SK-N-SH (cell line): ENCODE measurements at regions of chr2 and their contacts with region 1.

Region 1: DNA sequence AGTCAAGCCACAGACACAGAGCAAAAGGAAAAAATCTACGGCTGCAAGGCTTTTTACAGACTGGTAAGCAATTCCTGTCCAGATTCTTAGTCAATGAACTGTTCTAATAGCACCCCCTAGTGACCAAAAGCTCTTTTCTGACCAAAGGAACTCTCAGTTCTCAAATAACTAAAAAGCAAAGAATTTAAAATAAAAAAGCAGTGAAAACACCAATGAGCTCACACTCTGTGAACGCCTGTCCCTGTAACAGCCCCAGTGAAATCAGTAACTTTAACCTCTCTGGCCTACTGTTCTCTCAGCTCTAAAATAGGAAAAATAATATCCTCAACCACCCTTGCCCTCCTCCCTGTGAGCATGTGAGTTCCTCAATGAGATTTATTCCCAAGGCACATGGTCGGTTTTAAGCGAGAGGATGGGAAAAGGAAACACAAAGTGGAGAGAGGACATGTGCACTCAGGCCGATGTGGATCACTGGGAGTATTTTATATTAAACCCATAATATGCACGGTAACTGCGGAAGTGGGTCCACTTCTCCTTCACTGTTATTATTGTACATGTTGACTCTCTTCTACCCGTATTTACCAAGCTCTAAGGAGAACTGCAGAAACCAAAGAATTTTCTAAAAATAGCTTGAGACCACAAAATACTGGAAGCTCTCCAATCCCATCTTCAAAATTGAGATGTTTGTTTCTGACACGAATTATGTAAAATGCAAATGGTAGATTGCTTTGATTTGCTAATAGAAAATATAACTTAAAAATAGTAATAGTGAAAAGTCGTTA is 128.5 kb downstream of the STK39 start:
- DNase-seq: peak; percentile 17
- H3K4me3 ChIP-seq: no peak overlapping the region; a peak in 1 of 4 replicates
- H3K27ac ChIP-seq: peak overlapping the region; percentile 9 to 67; a peak in 2 of 4 replicates
- H3K4me1 ChIP-seq: peaks cover 0 to 8% of the 10 kb centered on the region in 2 experiments; a peak in 2 of 4 replicates
- H3K27me3 ChIP-seq: no peaks in the 10 kb centered on the region
- CTCF ChIP-seq: peak; percentile 89
- EP300 ChIP-seq: no peak
- RAD21 ChIP-seq: peak; percentile 88

Region 2: GRCh38 chr2:166539340-166540162 is 1579.4 kb before region 1 on chr2:
- CTCF ChIA-PET with region 1: interaction called, 20 read pairs
- POLR2A ChIA-PET with region 1: interaction called, 3 read pairs
- DNase-seq: peak; percentile 39
- H3K4me3 ChIP-seq: peak overlapping the region in 1 of 2 experiments; percentile 18; a peak in 1 of 4 replicates
- H3K27ac ChIP-seq: peak overlapping the region in 1 of 2 experiments; percentile 5; a peak in 1 of 4 replicates
- H3K4me1 ChIP-seq: peaks cover 0 to 2% of the 10 kb centered on the region in 2 experiments; a peak in 1 of 4 replicates
- H3K27me3 ChIP-seq: no peaks in the 10 kb centered on the region
- CTCF ChIP-seq: peak; percentile 94
- EP300 ChIP-seq: no peak
- RAD21 ChIP-seq: peak; percentile 96

Region 3: DNA sequence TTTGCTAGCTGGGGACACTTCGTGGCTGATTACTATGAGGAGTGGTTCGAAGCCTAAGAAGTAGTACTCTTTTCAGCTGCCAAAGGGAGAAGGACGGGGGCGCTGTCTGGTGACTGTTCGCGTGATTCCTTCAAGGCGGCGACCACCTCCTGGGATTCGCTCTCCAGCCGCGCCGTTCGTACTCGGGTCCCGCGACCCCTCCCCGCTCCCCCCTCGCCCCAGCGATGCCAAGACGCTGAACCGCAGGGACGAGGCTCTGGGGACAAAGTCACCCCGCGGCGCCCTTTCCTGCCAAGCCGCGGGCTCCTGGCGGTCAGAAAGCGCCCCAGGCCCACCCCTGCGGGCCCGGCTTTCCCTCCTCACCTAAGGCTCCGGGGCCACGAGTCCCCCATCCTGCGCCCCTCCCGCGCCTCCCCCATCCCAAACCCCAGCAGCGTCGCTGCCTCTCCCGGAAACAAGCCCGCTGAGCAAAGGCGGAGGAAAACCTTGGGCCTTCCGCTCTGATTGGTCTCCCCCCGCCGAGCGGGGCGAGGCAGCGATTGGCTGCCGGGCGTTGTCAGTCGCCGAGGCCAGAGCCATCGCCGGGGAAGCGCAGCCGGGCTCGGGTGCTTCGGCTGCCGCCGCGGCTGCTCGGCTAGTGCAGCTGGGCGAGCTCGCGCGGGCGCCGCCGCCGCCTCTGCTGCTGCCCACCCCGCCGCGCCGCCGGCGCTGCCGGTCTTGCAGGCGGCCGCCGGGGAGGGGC is 826.3 kb before region 1 on chr2:
- CTCF ChIA-PET with region 1: interaction called, 24 read pairs
- POLR2A ChIA-PET with region 1: no interaction called
- DNase-seq: peak; percentile 96
- H3K4me3 ChIP-seq: peak within 1 kb of the TSS; percentile 71 to 88
- H3K27ac ChIP-seq: peak within 1 kb of the TSS; percentile 46 to 88
- H3K4me1 ChIP-seq: peaks cover 0 to 14% of the 10 kb centered on the region in 2 experiments; a peak in 2 of 4 replicates
- H3K27me3 ChIP-seq: peaks cover 8% of the 10 kb centered on the region; the same call in 1 of the 2 replicates
- CTCF ChIP-seq: peak; percentile 56
- EP300 ChIP-seq: peak in 1 of 2 experiments; percentile 22; a peak in 1 of 4 replicates
- RAD21 ChIP-seq: peak; percentile 42

Region 4: GRCh38 chr2:167955264-167955906 is 163.5 kb before region 1 on chr2:
- CTCF ChIA-PET with region 1: interaction called, 27 read pairs
- POLR2A ChIA-PET with region 1: no interaction called
- DNase-seq: no peak
- H3K4me3 ChIP-seq: no peak overlapping the region
- H3K27ac ChIP-seq: no peak overlapping the region
- H3K4me1 ChIP-seq: no peaks in the 10 kb centered on the region; a peak in 2 of 4 replicates
- H3K27me3 ChIP-seq: no peaks in the 10 kb centered on the region
- CTCF ChIP-seq: no peak
- EP300 ChIP-seq: no peak
- RAD21 ChIP-seq: no peak

Region 5: GRCh38 chr2:168060986-168061750 is 57.8 kb before region 1 on chr2:
- CTCF ChIA-PET with region 1: interaction called, 15 read pairs
- POLR2A ChIA-PET with region 1: no interaction called
- DNase-seq: no peak
- H3K4me3 ChIP-seq: no peak overlapping the region
- H3K27ac ChIP-seq: peak overlapping the region in 1 of 2 experiments; percentile 28; a peak in 1 of 4 replicates
- H3K4me1 ChIP-seq: peaks cover 0 to 22% of the 10 kb centered on the region in 2 experiments; a peak in 2 of 4 replicates
- H3K27me3 ChIP-seq: no peaks in the 10 kb centered on the region
- CTCF ChIP-seq: no peak
- EP300 ChIP-seq: no peak
- RAD21 ChIP-seq: no peak

Region 6: GRCh38 chr2:168132389-168132788 is 13.5 kb after region 1 on chr2:
- CTCF ChIA-PET with region 1: interaction called, 39 read pairs
- POLR2A ChIA-PET with region 1: no interaction called
- DNase-seq: no peak
- H3K4me3 ChIP-seq: no peak overlapping the region
- H3K27ac ChIP-seq: no peak overlapping the region
- H3K4me1 ChIP-seq: peaks cover 0 to 4% of the 10 kb centered on the region in 2 experiments; a peak in 3 of 4 replicates
- H3K27me3 ChIP-seq: no peaks in the 10 kb centered on the region
- CTCF ChIP-seq: no peak
- EP300 ChIP-seq: no peak
- RAD21 ChIP-seq: no peak

Region 7: GRCh38 chr2:168363347-168364092 is 244.6 kb after region 1 on chr2:
- CTCF ChIA-PET with region 1: no interaction called
- POLR2A ChIA-PET with region 1: no interaction called
- DNase-seq: no peak
- H3K4me3 ChIP-seq: no peak overlapping the region
- H3K27ac ChIP-seq: no peak overlapping the region
- H3K4me1 ChIP-seq: no peaks in the 10 kb centered on the region
- H3K27me3 ChIP-seq: no peaks in the 10 kb centered on the region
- CTCF ChIP-seq: no peak
- EP300 ChIP-seq: no peak
- RAD21 ChIP-seq: no peak